ENCODE measurements at regions of chr4 and their contacts with region 1.

Region 1: DNA sequence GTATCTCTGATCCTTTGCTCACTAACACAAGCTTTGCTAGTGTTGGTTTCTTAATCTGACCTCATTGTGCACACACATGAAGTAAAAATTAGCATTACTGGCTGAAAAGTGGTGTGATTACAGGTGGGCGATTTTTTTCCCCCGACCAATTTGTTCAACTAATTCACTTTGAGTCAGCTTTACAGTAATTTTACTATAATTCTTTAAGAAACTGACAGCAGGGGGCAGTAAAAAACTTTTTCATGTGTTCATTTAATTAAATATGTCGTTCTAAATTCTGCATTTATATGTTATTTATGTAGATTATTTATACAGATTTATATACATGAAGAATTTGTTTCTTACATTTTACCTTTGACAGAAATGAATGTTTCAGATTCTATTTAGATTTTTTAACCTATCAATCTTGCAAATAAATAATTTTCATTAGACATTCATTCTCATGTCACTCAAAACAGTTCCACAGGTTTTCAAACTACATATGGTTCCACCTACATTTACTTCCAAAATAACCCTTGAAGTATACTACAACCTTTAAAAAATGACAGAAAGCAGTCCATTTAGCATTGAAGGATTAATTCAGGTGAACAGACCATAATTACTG is 17.5 kb downstream of the PALLD start:
- DNase-seq: no peak
- ATAC-seq: no peak

Region 2: DNA sequence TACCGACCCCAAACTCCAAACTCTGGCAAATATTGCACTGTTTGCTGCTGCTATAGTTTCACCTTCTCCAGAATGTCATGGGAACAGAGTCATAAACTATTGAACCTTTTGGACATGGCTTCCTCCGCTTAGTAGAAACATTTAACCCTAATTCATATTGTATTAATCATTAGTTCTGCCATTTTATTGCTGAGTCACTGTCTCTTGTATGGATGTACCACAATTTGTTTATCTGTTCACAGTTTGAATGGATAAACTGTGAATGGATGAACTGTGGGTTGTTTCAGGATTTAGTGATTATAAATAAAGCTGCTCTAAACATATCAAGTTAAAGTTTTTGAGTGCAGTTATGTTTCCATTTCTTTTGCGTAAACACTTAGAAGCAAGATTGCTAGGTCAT is 411.9 kb before region 1 on chr4:
- intact Hi-C with region 1: no loop called
- DNase-seq: no peak
- ATAC-seq: no peak

Region 3: DNA sequence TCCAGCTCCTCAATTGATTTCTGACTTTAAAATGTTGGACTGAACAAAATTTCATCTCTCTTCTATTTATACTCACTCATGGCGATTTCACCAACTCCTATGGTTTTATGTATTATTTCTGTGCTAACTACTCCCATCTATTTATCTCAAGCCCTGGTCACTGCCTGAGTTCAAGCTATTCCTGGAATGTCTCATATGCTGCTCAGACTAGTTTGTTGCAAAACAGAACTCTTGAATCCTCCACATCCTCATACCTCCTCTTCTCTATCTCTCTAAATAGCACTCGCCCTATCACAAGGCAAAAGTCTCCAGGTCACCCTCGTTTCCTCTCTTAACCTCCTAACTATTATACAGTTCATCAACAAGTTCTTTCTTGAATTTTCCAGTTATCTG is 176.8 kb before region 1 on chr4:
- intact Hi-C with region 1: no loop called
- DNase-seq: no peak
- ATAC-seq: no peak

Region 4: GRCh38 chr4:168685136-168685809 is 170.9 kb after region 1 on chr4:
- intact Hi-C with region 1: loop called (anchors 10 kb)
- DNase-seq: no peak
- ATAC-seq: no peak

Region 5: GRCh38 chr4:168923526-168924194 is 409.3 kb after region 1 on chr4:
- intact Hi-C with region 1: loop called (anchors 10 kb)
- DNase-seq: no peak
- ATAC-seq: peak; percentile 40